ENCODE measurements at regions of chr4 and their contacts with region 1.

Region 1: DNA sequence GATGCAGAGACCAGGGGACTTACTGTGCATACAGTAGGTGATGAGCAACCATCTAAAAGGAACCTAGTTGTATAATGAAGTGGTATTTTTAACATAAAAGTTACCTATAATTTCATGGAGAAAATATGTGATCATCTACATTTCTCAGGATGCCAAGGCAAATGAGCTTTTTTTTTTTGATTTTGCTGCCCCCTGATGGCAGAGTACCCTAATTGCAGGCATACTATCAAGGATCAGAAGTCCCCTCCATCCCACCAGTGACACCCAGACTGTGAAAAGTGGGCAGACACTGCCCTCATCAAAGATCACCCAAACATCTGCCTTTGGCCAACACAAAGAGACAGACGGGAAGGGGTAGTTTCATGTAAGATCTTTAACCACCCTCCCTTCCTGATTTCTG is 9.6 kb upstream of the ABLIM2 start:
- DNase-seq: no peak
- H3K4me3 ChIP-seq: no peak overlapping the region
- H3K27ac ChIP-seq: peak overlapping the region in 1 of 5 donors; percentile 83
- H3K4me1 ChIP-seq: no peaks in the 10 kb centered on the region
- H3K27me3 ChIP-seq: no peaks in the 10 kb centered on the region
- CTCF ChIP-seq: peak in 5 of 6 experiments; percentile 33 to 56 (median 44)
- POLR2A ChIP-seq: no peak

Region 2: DNA sequence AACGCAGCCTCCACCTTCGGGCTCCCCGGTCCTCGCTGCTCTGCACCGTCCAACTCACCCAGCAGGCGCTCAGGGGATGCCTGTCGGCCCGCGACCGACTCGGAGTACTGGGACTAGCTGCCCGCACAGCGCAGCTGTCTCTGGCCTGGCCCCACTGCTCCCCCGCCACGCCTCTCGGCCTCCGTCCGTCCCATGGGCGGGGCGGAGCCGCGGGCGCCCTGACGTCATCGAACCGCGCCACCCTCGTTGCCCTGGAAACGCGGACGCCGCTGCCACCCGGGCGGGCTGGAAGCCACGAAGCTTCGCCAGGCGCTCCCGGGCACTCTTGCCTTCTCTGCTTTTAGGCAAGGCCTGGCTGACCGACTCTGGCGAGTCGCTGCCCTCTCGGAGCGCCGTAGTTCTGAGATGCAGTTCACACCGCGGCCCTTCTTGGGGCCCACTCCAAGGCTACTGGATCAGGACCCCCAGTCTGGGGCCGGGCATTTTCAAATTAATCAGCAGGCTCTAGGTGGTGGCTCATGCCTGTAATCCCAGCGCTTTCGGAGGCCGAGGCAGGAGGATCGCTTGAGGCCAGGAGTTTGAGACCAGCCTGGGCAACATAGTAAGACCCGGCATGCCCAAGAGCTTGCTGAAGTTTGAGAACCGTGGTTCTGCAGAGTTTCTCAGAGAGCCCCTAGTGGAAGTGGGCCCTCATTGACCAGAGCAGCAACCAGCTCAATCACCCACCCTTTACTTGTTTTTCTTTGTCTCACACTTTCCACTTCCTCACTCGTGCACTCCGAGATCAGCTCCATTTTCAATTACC is 260.3 kb after region 1 on chr4:
- intact Hi-C with region 1: loop called in 1 of 2 experiments (anchors 10 kb)
- DNase-seq: peak; percentile 89 to 95 (median 94)
- H3K4me3 ChIP-seq: peak overlapping the region; percentile 15 to 92 (median 69)
- H3K27ac ChIP-seq: peak overlapping the region in 4 of 5 donors; percentile 75 to 85 (median 80)
- H3K4me1 ChIP-seq: peaks cover 7 to 15% of the 10 kb centered on the region in 2 donors
- H3K27me3 ChIP-seq: no peaks in the 10 kb centered on the region
- CTCF ChIP-seq: peak in 3 of 6 experiments; percentile 25 to 26 (median 26)
- POLR2A ChIP-seq: peak; percentile 57 to 84

Measured in adrenal gland (tissue), 19 donors.